ENCODE measurements at regions of chr1 and their contacts with region 1.

Region 1: GRCh38 chr1:52296345-52296744 is 69.7 kb downstream of the CC2D1B start:
- DNase-seq: peak in 2 of 9 experiments; percentile 43 to 49
- ATAC-seq: peak; percentile 57
- H3K4me3 ChIP-seq: no peak overlapping the region
- H3K4me3 Mint-ChIP-seq: no peak overlapping the region
- H3K27ac ChIP-seq: no peak overlapping the region
- H3K27ac Mint-ChIP-seq: no peak overlapping the region
- H3K4me1 ChIP-seq: no peaks in the 10 kb centered on the region
- H3K4me1 Mint-ChIP-seq: no peaks in the 10 kb centered on the region
- H3K27me3 ChIP-seq: no peaks in the 10 kb centered on the region
- H3K27me3 Mint-ChIP-seq: no peaks in the 10 kb centered on the region
- CTCF ChIP-seq: peak; percentile 34

Region 2: GRCh38 chr1:51897699-51898031 is 398.7 kb before region 1 on chr1:
- CTCF ChIA-PET with region 1: interaction called, 5 read pairs
- POLR2A ChIA-PET with region 1: no interaction called
- intact Hi-C with region 1: loop called in 1 of 2 experiments (anchors 5 kb)
- DNase-seq: no peak
- ATAC-seq: no peak
- H3K4me3 ChIP-seq: no peak overlapping the region
- H3K4me3 Mint-ChIP-seq: no peak overlapping the region
- H3K27ac ChIP-seq: no peak overlapping the region
- H3K27ac Mint-ChIP-seq: no peak overlapping the region
- H3K4me1 ChIP-seq: no peaks in the 10 kb centered on the region
- H3K4me1 Mint-ChIP-seq: no peaks in the 10 kb centered on the region
- H3K27me3 ChIP-seq: peaks cover 0 to 2% of the 10 kb centered on the region in 2 experiments
- H3K27me3 Mint-ChIP-seq: peaks cover 49% of the 10 kb centered on the region
- CTCF ChIP-seq: no peak

Region 3: DNA sequence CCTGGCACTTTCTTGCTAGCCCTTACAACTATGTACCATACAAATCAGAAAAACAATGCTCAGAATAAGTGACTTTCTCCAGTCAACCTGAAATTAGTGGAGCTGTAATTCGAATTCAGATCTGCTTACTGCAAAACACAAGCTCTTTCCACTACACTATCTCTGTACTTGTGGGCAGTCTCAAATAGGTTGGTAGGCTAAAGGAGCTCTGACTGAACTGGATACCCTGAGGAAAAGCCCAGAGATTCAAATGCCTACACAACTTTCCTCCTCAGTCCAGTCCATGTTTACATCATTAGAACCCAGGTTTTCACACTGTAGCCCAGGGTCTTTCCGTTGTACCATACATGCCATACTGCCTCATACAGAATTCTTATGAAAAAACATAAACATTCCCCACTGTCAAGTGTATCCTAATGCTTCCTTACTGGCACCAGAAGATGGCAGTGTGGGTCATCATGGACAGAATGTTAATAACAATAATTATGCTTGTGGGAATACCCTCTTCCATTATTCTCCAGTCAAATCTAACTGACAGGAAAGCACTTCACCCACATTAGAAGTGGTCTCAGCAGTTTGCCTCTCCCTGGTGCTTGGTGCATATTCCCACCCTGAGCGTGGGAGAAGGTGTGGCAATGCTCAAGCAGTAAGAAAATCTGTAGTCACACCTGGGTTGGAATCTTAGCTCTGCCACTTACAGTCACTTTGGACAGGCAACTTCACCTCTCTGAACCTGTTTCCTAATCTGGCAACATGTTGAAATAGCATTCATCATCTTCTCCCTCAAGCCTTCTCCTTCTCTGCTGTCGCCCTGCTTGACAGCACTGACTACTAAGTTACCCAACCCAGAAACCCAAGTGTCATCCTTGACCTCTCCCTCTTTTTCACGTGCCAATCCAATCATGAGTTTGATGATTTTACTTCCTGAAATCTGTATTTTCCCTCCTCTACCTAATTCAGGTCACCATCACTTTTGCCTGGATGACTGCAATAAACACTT is 168.9 kb before region 1 on chr1:
- CTCF ChIA-PET with region 1: interaction called, 13 read pairs
- POLR2A ChIA-PET with region 1: no interaction called
- intact Hi-C with region 1: loop called (anchors 1 kb)
- DNase-seq: peak in 3 of 9 experiments; percentile 21 to 63 (median 57)
- ATAC-seq: no peak
- H3K4me3 ChIP-seq: no peak overlapping the region
- H3K4me3 Mint-ChIP-seq: no peak overlapping the region
- H3K27ac ChIP-seq: no peak overlapping the region
- H3K27ac Mint-ChIP-seq: no peak overlapping the region
- H3K4me1 ChIP-seq: no peaks in the 10 kb centered on the region
- H3K4me1 Mint-ChIP-seq: no peaks in the 10 kb centered on the region
- H3K27me3 ChIP-seq: no peaks in the 10 kb centered on the region
- H3K27me3 Mint-ChIP-seq: peaks cover 16% of the 10 kb centered on the region
- CTCF ChIP-seq: peak; percentile 41